Dorsolateral prefrontal cortex (tissue), 120 donors: ENCODE measurements at regions of chr5 and their contacts with region 1.

Region 1: DNA sequence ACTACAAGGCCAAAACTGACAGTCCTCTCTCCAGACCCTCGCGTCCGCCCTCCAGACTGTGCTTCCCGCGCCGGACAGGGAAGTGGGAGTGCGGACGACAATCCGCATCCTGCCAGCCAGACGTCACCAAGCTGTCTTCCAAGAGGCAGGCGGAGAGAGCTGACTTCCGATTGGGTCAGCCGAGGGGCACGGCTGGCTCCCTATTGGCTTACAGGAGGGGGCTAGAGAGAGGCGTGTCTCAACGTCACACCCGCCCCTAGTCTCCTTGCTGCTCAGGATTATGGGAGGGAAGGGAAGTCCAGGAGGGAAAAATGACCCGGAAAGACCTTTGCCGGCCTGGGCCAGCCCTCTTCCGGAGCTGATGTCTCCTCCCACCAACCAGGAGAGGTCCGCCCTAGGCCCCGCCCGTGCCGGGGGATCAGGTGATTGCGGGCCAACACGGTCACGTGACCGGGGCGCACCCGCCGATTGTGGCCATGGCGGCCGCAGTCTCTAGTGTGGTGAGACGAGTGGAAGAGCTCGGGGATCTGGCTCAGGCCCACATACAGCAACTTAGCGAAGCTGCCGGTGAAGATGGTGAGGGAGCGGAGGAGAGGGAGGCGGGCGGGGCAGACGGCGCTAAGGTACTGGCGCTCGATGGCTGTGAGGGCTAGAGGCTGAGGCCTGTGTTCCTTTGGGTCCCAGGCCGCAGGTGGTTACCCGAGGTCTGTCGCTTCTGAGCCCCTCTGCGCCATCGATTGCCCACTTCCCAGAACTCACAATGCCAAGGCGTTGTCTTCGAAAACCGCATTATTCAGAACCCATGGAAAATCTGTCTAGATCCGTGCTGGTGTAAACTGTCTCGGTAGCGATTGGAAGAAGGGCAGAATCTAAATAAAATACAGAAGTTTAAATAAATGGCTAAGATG is at the start of gene RIMOC1:
- DNase-seq: peak; percentile 98 to 100 (median 99)
- H3K4me3 ChIP-seq: peak within 1 kb of the TSS; percentile 64 to 99 (median 90)
- H3K27ac ChIP-seq: peak within 1 kb of the TSS; percentile 59 to 95 (median 91)
- H3K27me3 ChIP-seq: peaks cover 0 to 4% (median 0%) of the 10 kb centered on the region in 45 donors
- CTCF ChIP-seq: peak in 23 of 56 donors; percentile 5 to 64 (median 24)
- total RNA-seq, gene RIMOC1: 23.2 to 54.9 (median 37.9) TPM

Region 2: DNA sequence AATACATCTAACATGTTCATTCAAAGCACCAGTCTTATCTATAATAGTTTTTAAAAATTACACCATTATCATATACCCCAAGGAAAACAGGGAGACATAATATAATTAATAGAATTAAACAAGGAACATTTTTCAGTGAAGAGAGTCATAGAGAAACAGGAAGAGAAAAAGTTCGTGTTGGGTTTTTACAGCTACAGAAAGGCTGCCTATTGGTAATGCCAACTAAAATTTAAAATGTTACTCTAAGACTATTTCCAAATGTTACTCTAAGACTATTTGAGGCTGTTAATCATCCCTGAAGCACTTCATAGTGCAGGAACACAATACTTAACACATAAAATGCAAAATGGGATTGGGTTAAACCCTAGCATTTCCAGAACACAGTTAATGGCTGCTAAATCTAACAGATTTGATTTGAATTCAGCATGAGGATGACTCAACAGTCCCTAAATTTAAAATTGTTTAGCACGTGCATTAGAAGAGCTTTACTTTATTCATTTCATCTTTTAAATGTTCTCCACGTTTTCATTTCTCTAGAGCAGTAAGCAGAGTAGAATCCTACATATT is 88.4 kb before region 1 on chr5:
- intact Hi-C with region 1: no loop called
- DNase-seq: no peak
- H3K4me3 ChIP-seq: no peak overlapping the region
- H3K27ac ChIP-seq: peak overlapping the region in 1 of 59 donors; percentile 21
- H3K27me3 ChIP-seq: no peaks in the 10 kb centered on the region
- CTCF ChIP-seq: no peak

Region 3: GRCh38 chr5:41869739-41870626 is 34.2 kb before region 1 on chr5 and contains the start of gene OXCT1:
- intact Hi-C with region 1: loop called (anchors 2 to 5 kb)
- DNase-seq: peak; percentile 41 to 77 (median 72)
- H3K4me3 ChIP-seq: peak within 1 kb of the TSS; percentile 48 to 98 (median 86)
- H3K27ac ChIP-seq: peak within 1 kb of the TSS in 58 of 59 donors; percentile 21 to 94 (median 84)
- H3K27me3 ChIP-seq: no peaks in the 10 kb centered on the region
- CTCF ChIP-seq: peak in 1 of 56 donors; percentile 14
- total RNA-seq, gene OXCT1: 34.8 to 117 (median 79.4) TPM

Region 4: DNA sequence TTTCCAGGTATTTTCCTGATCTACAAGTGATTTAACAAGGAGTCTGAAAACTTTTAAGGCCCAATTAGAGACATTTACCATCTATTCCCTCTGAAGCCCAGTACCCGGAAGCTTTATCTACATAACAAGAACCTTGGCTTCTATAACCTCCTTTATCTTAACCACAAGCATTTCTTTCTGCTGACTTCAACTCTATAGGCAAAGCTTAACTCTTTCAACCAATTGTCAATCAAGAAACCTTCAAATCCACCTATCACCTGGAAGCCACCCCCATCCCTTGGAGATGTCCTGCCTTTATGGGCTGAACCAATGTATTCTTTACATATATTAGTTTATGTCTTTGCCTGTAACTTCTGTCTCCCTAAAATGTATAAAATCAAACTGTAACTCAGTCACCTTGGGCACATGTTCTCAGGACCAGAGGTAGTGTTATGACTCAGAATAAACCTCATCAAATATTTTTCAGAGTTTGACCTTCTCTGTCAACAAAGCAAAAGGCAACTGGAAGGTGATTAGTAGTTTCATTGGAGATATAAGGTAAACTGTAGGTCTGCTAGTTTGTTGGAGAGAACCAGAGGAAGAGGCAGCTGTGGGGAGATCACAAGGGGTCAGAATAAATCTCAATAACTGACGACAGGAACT is 13.0 kb before region 1 on chr5:
- intact Hi-C with region 1: no loop called
- DNase-seq: no peak
- H3K4me3 ChIP-seq: no peak overlapping the region
- H3K27ac ChIP-seq: no peak overlapping the region
- H3K27me3 ChIP-seq: peaks cover 0 to 22% (median 3%) of the 10 kb centered on the region in 45 donors
- CTCF ChIP-seq: no peak

Region 5: GRCh38 chr5:41924872-41925554 is 20.9 kb after region 1 on chr5 and contains the start of gene FBXO4:
- intact Hi-C with region 1: loop called in 1 of 2 experiments (anchors 1 kb)
- DNase-seq: peak; percentile 62 to 90 (median 80)
- H3K4me3 ChIP-seq: peak within 1 kb of the TSS; percentile 64 to 93 (median 81)
- H3K27ac ChIP-seq: peak within 1 kb of the TSS; percentile 35 to 97 (median 87)
- H3K27me3 ChIP-seq: no peaks in the 10 kb centered on the region
- CTCF ChIP-seq: peak; percentile 20 to 80 (median 60)
- total RNA-seq, gene FBXO4: 4.3 to 17.0 (median 8.6) TPM

Region 6: GRCh38 chr5:42366051-42366450 is 461.9 kb after region 1 on chr5:
- intact Hi-C with region 1: no loop called
- DNase-seq: no peak
- H3K4me3 ChIP-seq: no peak overlapping the region
- H3K27ac ChIP-seq: no peak overlapping the region
- H3K27me3 ChIP-seq: no peaks in the 10 kb centered on the region
- CTCF ChIP-seq: no peak

Region 7: DNA sequence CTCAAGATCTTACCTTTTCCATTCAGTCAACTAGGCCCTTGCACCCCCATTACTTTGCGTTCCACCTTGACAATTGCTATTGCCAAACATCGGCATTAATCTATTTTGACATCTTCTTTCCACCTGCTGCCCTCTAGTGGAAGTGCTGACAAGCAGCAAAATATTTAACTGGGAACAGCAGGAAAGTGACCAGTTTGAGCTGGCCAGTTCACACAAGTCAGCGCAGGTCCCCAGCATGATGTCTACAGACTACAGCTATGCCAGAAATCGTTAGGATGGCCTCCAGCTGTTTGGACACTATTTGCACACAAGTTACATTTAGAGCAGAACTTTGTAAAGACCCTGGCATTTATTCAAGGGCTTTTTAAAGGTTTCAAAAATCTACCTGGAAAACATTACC is 679.2 kb after region 1 on chr5:
- intact Hi-C with region 1: no loop called
- DNase-seq: peak in 3 of 10 donors; percentile 10 to 34 (median 28)
- H3K4me3 ChIP-seq: no peak overlapping the region
- H3K27ac ChIP-seq: no peak overlapping the region
- H3K27me3 ChIP-seq: peaks cover 0 to 5% (median 0%) of the 10 kb centered on the region in 45 donors
- CTCF ChIP-seq: peak; percentile 56 to 83 (median 76)